Activated naive CD4-positive, alpha-beta T cell treated with anti-CD3 and anti-CD28 coated beads for 36 hours (primary cell): ENCODE measurements at regions of chr11 and their contacts with region 1.

Region 1: GRCh38 chr11:102560555-102561011 is 30.0 kb upstream of the MMP7 start:
- DNase-seq: no peak
- H3K4me3 Mint-ChIP-seq: peak overlapping the region; percentile 35
- H3K27ac Mint-ChIP-seq: peak overlapping the region; percentile 39
- H3K4me1 Mint-ChIP-seq: peaks cover 41% of the 10 kb centered on the region
- H3K27me3 Mint-ChIP-seq: no peaks in the 10 kb centered on the region

Region 2: GRCh38 chr11:102279641-102280170 is 280.9 kb before region 1 on chr11:
- CTCF ChIA-PET with region 1: no interaction called
- intact Hi-C with region 1: loop called (anchors 5 kb)
- DNase-seq: peak; percentile 38
- H3K4me3 Mint-ChIP-seq: peak overlapping the region; percentile 23
- H3K27ac Mint-ChIP-seq: no peak overlapping the region
- H3K4me1 Mint-ChIP-seq: peaks cover 7% of the 10 kb centered on the region
- H3K27me3 Mint-ChIP-seq: peaks cover 6% of the 10 kb centered on the region

Region 3: DNA sequence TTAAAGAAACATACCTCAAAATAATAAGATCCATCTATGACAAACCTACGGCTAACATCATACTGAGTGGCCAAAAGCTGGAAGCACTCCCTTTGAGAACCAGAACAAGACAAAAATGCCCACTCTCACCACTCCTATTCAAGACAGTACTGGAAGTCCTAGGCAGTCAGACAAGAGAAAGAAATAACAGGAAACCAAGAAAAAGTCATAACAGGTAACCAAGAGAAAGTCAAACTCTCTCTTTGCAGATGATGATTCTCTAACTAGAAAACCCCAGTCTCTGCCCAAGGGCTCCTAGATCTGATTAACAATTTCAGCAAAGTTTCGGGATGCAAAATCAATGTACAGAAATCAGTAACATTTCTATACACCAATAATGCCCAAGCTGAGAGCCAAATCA is 143.6 kb before region 1 on chr11:
- CTCF ChIA-PET with region 1: no interaction called
- intact Hi-C with region 1: loop called (anchors 5 kb)
- DNase-seq: peak; percentile 38
- H3K4me3 Mint-ChIP-seq: peak overlapping the region; percentile 34
- H3K27ac Mint-ChIP-seq: peak overlapping the region; percentile 84
- H3K4me1 Mint-ChIP-seq: peaks cover 92% of the 10 kb centered on the region
- H3K27me3 Mint-ChIP-seq: no peaks in the 10 kb centered on the region

Region 4: GRCh38 chr11:102592634-102593581 is 32.3 kb after region 1 on chr11:
- CTCF ChIA-PET with region 1: no interaction called
- intact Hi-C with region 1: loop called (anchors 1 kb)
- DNase-seq: no peak
- H3K4me3 Mint-ChIP-seq: no peak overlapping the region
- H3K27ac Mint-ChIP-seq: no peak overlapping the region
- H3K4me1 Mint-ChIP-seq: peaks cover 19% of the 10 kb centered on the region
- H3K27me3 Mint-ChIP-seq: no peaks in the 10 kb centered on the region